CD4-positive, alpha-beta memory T cell (primary cell): ENCODE measurements at regions of chr13 and their contacts with region 1.

Region 1: DNA sequence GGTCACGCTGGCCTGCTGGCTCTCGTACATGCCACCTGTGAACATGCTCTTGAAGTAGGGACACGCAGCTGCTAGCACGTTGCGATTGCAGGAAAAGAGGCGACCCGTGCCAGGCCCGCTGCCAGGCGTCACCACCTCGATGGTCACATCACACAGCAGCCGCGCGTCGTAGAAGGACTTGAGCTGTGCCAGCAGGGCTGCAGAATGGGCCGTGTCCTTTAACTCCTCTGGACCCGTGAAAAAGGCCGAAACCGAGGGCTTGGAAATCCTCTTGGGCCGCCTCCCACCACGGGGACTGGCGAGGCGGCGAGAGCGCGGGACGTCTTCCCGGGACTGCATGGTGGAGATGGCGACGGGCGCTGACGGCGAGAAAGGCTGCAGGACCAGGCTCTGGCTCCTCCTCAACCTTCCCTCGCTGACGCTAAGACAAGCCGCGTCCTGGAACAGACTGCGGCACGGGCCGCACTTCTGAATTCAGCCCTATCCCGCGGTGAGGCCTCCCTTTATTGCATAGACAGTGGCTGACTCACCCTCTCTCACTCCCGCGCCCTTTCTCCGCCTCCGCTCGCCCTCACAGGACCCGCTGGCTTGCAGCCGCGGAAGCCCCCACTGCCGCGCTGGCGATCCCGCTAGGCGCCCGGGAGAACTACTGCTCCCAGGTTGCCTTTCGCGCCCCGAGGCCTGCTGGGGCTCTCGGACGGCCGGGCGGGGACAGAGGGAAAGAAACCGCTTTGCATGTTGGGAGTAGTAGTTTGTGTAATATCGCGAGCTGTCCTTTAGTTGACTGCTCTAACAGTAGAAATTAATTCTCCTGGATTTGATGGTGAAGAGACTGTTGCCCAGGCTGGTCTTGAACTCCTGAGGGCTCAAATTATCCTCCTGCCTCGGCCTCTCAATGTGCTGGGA is at the start of gene KBTBD7:
- DNase-seq: peak; percentile 83 to 90 (median 86)
- H3K4me3 ChIP-seq: peak within 1 kb of the TSS; percentile 18 to 94
- H3K4me3 Mint-ChIP-seq: peak within 1 kb of the TSS; percentile 93 to 97 (median 94)
- H3K27ac ChIP-seq: peak within 1 kb of the TSS; percentile 72
- H3K27ac Mint-ChIP-seq: peak within 1 kb of the TSS; percentile 72 to 97 (median 92)
- H3K4me1 ChIP-seq: peaks cover 29% of the 10 kb centered on the region
- H3K4me1 Mint-ChIP-seq: peaks cover 23 to 45% (median 33%) of the 10 kb centered on the region in 4 donors
- H3K27me3 ChIP-seq: no peaks in the 10 kb centered on the region
- H3K27me3 Mint-ChIP-seq: no peaks in the 10 kb centered on the region
- total RNA-seq, gene KBTBD7: 11.1 to 11.8 TPM

Region 2: DNA sequence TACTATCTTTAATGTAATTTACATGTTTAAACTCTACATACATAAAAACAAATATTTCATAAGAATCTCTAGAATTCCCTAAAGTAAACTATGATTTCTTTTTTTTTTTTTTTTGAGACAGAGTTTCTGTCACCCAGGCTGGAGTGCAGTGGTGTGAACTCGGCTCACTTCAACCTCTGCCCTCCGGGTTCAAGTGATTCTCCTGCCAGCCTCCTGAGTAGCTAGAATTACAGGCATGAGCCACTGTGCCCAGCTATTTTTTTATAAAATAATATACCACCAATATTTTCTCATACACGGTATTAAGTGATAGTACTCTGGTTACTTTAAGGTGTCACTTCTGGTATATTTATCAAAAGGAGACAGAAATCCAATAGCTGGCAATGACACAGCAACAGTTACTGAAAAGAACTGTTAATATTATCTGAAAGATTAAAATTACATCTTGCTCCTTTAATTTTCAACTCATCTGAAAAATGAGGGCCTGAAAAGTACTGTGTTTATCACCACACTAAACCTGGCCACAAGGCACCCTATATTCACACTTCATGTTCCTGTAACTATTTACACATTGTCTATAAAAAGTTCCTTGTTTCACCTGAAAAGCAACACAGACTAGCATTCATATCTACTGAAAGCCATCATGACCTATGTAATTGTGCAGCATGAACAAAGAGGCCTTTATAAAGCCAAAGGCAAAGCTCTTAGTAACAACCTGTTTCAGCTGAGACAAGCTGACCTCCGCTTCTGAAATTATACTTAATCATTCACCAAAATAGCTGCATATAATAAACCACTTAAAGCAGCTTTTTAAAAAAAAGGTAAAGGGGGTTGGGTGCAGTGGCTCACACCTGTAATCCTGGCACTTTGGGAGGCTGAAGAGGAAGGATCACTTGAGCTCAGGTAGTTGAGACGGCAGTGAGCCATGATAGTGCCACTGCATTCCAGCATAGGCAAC is 298.7 kb before region 1 on chr13:
- CTCF ChIA-PET with region 1: no interaction called
- POLR2A ChIA-PET with region 1: no interaction called
- intact Hi-C with region 1: no loop called
- DNase-seq: no peak
- H3K4me3 ChIP-seq: no peak overlapping the region
- H3K4me3 Mint-ChIP-seq: no peak overlapping the region
- H3K27ac ChIP-seq: no peak overlapping the region
- H3K27ac Mint-ChIP-seq: peak overlapping the region in 4 of 7 donors; percentile 25 to 51 (median 48)
- H3K4me1 ChIP-seq: no peaks in the 10 kb centered on the region
- H3K4me1 Mint-ChIP-seq: peaks cover 6 to 9% (median 8%) of the 10 kb centered on the region in 4 donors
- H3K27me3 ChIP-seq: no peaks in the 10 kb centered on the region
- H3K27me3 Mint-ChIP-seq: no peaks in the 10 kb centered on the region

Region 3: DNA sequence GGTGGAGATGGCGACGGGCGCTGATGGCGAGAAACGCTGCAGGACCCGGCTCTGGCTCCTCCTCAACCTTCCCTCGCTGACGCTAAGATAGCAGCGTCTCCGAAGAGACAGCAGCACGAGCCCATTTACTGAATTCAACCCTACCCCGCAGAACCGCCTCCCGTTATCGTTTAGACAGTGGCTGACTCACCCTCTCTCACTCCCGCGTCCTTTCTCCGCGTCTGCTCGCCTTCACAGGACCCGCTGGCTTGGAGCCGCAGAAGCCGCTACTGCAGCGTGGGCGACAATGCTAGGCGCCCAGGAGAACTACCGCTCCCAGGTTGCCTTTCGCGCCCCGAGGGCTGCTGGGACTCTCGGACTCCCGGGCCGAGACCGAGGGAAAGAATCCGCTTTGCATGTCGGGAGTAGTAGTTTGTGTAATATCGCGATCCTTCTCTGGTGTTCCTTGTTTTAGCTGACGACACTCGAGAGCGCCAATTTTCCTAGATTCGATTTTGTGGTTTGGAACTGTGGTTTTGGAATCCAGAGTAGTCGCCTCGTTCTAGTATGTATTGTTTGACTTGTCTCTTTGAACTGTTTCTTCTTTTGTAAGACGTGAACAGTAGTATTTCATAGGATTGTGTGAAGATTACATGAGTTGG is 61.5 kb before region 1 on chr13 and contains the start of gene KBTBD6:
- CTCF ChIA-PET with region 1: interaction called, 5 read pairs
- POLR2A ChIA-PET with region 1: interaction called, 5 read pairs
- intact Hi-C with region 1: loop called (anchors 1 kb)
- DNase-seq: peak; percentile 89 to 95 (median 90)
- H3K4me3 ChIP-seq: peak within 1 kb of the TSS; percentile 56
- H3K4me3 Mint-ChIP-seq: peak within 1 kb of the TSS; percentile 95 to 100 (median 99)
- H3K27ac ChIP-seq: peak within 1 kb of the TSS; percentile 63
- H3K27ac Mint-ChIP-seq: peak within 1 kb of the TSS; percentile 91 to 98 (median 98)
- H3K4me1 ChIP-seq: peaks cover 49% of the 10 kb centered on the region
- H3K4me1 Mint-ChIP-seq: peaks cover 39 to 55% (median 46%) of the 10 kb centered on the region in 4 donors
- H3K27me3 ChIP-seq: no peaks in the 10 kb centered on the region
- H3K27me3 Mint-ChIP-seq: no peaks in the 10 kb centered on the region
- total RNA-seq, gene KBTBD6: 9.9 to 10.5 TPM